ENCODE measurements at regions of chr12 and their contacts with region 1.

Region 1: GRCh38 chr12:102427543-102427941 is 52.8 kb downstream of the IGF1 start:
- DNase-seq: peak; percentile 80 to 89
- ATAC-seq: peak; percentile 84 to 91
- H3K4me3 ChIP-seq: peak overlapping the region in 2 of 4 donors; percentile 10 to 12
- H3K27ac ChIP-seq: peak overlapping the region; percentile 84 to 93 (median 91)
- H3K4me1 ChIP-seq: peaks cover 36 to 39% of the 10 kb centered on the region in 2 donors
- H3K27me3 ChIP-seq: no peaks in the 10 kb centered on the region
- CTCF ChIP-seq: no peak
- POLR2A ChIP-seq: peak in 1 of 2 donors; percentile 31

Region 2: DNA sequence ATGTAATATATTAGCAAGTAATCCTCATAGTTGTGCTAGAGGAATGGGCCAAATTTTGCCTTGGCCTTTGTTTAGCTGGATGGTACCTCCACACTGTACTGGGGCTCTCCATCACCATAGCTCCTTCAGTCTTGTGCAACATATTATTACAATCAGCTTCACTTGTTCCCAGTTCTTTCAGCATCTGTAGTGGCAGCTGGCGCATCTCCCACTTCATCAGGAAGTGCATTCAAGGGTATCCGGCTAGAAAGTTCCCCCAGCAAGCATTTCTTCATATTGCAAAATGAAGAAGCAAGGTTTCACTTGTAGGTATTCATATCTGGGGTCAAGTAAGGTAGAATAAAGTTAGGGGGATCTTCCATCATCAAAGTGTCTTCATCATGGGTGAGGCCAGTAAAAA is 70.9 kb before region 1 on chr12:
- in situ Hi-C with region 1: no loop called
- intact Hi-C with region 1: no loop called
- DNase-seq: no peak
- ATAC-seq: no peak
- H3K4me3 ChIP-seq: no peak overlapping the region
- H3K27ac ChIP-seq: no peak overlapping the region
- H3K4me1 ChIP-seq: no peaks in the 10 kb centered on the region
- H3K27me3 ChIP-seq: no peaks in the 10 kb centered on the region
- CTCF ChIP-seq: no peak
- POLR2A ChIP-seq: no peak

Region 3: GRCh38 chr12:102376181-102376747 is 51.3 kb before region 1 on chr12:
- in situ Hi-C with region 1: no loop called
- intact Hi-C with region 1: loop called (anchors 1 kb)
- DNase-seq: peak; percentile 56 to 83
- ATAC-seq: peak; percentile 87 to 92
- H3K4me3 ChIP-seq: no peak overlapping the region
- H3K27ac ChIP-seq: peak overlapping the region; percentile 65 to 79 (median 74)
- H3K4me1 ChIP-seq: peaks cover 7 to 14% of the 10 kb centered on the region in 2 donors
- H3K27me3 ChIP-seq: no peaks in the 10 kb centered on the region
- CTCF ChIP-seq: no peak
- POLR2A ChIP-seq: no peak

Region 4: GRCh38 chr12:102406033-102406584 is 21.4 kb before region 1 on chr12:
- in situ Hi-C with region 1: no loop called
- intact Hi-C with region 1: loop called (anchors 1 kb)
- DNase-seq: peak; percentile 49 to 75
- ATAC-seq: peak; percentile 58 to 67
- H3K4me3 ChIP-seq: no peak overlapping the region
- H3K27ac ChIP-seq: peak overlapping the region in 3 of 4 donors; percentile 12 to 26 (median 13)
- H3K4me1 ChIP-seq: peaks cover 17 to 35% of the 10 kb centered on the region in 2 donors
- H3K27me3 ChIP-seq: no peaks in the 10 kb centered on the region
- CTCF ChIP-seq: no peak
- POLR2A ChIP-seq: no peak

Measured in gastrocnemius medialis (tissue), 4 donors.